ENCODE measurements at regions of chr5 and their contacts with region 1.

Region 1: DNA sequence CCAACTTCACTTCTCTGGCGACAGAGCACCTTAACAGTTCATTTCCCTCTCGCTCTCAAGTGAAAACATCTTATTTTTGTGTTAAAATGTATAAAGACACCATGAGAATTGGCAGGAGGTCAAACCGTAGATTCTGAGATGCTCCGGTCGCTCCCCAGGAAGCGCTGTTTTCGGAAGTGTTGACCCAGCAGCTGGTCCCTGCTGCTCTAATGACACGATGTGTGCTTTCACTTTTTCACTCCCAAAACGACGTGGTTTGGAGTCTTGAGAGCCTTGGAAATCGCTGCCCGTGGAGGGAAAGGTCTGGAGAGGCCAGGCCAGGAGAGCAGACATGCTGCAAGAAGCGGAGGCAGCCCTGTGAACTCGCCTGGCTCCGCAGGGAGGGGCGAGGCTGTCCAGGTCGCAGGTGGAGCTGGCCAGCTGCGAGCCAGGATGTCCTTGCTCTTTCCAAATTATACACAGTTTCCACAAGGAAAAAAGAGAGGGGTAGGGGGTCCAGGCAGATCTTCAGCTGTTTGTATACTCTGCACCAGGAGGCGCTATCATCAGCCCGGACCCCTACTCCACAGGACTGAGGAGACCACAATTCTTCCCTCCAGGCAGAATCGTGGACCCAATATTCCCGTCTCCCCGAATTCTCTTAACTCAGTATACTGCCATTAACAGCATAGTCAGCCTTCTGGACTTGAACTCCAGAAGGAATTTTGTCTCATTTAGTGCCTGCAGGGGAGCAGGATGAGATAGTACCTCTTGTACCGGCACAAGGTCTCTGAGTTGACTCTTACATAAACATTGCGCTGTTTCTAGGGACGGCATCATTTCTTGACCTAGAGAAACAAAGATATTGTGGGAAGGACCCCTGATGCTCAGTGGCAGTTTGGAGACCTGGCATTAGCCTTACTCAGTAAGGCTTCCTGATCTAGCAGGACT is 248.6 kb upstream of the ANKRD55 start:
- DNase-seq: peak; percentile 87

Region 2: GRCh38 chr5:56350598-56351170 is 131.0 kb before region 1 on chr5:
- intact Hi-C with region 1: loop called (anchors 5 kb)
- DNase-seq: peak; percentile 83

Region 3: GRCh38 chr5:56460679-56461191 is 21.0 kb before region 1 on chr5:
- intact Hi-C with region 1: loop called (anchors 2 kb)
- DNase-seq: no peak

Region 4: GRCh38 chr5:56517011-56517416 is 35.3 kb after region 1 on chr5:
- intact Hi-C with region 1: no loop called
- DNase-seq: no peak

Region 5: DNA sequence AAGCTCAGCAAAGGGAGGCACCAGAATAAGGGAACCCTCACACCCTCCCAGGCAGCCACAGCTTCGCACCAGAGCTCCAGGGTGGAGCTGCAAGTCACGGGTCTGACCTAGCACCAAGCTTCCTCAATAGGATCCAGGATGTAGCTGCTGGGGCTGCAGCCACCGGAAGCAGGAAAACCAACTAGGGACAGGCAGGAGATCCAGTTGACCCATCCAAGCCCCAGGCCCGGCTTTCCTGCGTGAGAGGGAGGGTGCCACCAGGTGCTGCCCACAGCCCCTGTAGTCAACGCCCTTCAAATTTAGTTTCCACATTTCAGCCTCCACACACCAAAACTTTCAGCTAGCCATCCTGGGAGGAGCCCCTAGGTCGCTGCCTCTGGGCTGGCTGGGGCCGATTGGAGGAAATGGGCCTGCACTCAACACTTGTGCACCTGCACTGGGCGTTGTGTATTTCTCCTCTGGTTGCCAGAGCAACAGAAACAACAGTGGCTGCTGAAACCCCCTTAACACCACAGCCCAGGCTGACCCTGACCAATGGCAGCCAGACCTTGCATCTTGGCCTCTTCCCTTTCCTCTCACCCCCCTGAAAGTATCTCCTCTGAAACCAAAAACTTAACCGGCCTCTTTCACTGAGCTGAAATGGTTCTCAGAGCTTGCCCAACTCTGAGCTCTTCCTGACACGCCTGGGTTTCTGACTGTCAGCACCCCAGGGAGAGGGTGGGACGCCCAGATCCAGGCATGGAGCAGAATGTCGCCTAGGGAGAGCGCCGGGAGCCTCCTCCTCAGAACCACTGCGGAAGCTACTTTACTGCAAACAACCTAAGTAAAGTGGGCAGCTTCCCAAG is 107.2 kb after region 1 on chr5:
- intact Hi-C with region 1: loop called (anchors 5 kb)
- DNase-seq: peak; percentile 81

Region 6: GRCh38 chr5:56814963-56815658 is 333.4 kb after region 1 on chr5 and contains the start of gene MAP3K1:
- intact Hi-C with region 1: loop called (anchors 1 kb)
- DNase-seq: peak; percentile 90
- total RNA-seq, gene MAP3K1: 6.8 TPM

Region 7: DNA sequence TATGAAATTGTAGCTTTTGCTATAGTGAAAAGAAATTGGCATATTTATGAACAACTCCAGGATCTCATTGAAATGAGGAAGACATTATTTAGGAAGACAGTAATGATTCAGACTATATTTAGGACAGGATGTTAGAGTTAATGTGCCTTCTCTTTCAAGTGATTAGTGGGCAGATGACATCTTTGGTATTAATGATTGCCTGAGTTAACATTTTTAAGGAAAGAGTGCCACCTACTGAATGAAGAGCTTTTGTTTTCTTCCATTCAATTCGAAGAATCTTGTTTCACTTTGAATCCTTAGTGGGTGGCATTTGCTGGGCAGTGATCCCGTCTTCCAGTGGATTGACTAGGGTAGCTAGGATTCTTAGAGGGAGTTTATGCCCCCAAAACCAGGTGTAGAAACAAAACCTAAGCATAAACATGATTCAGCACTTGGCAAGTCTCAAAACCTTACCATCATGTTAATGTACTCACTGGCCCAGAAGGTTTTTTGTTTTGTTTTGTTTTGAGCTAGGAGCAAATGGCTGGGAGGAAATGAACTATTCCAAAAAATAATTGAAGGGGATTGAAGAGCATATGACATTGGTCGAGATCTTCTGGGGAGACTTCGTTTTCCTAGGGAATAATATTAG is 356.8 kb after region 1 on chr5:
- intact Hi-C with region 1: loop called (anchors 5 kb)
- DNase-seq: no peak